Heart left ventricle (tissue), 16 donors: ENCODE measurements at regions of chr13 and their contacts with region 1.

Region 1: GRCh38 chr13:95301183-95301967 is at the start of gene ABCC4:
- DNase-seq: peak; percentile 66 to 81 (median 73)
- ATAC-seq: peak; percentile 35 to 93 (median 79)
- H3K4me3 ChIP-seq: peak within 1 kb of the TSS; percentile 61 to 97 (median 78)
- H3K27ac ChIP-seq: peak within 1 kb of the TSS; percentile 49 to 93 (median 77)
- H3K4me1 ChIP-seq: peaks cover 0 to 34% (median 9%) of the 10 kb centered on the region in 12 donors
- H3K27me3 ChIP-seq: no peaks in the 10 kb centered on the region
- CTCF ChIP-seq: peak in 2 of 12 donors; percentile 5 to 19
- POLR2A ChIP-seq: no peak
- total RNA-seq, gene ABCC4: 2.5 to 9.0 (median 5.5) TPM

Region 2: DNA sequence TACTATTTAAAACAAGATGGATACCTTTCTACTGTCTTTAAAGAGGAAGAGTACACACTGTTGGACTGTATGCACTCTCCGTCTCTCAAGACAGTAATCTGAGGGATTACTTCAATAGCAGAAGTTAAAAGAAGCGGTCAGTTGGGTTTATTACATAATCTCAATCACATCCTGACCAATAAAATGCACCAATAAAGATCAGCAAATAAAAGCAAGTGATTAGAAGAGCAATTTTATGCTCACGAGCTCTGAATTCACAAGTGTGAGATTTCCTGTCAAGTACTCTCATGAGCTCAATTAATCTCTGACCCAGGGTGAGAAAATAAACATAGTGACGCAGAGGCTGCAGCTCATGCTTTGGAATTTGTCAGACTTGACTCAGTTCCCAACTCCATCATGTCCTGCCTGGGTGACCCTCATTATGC is 12.3 kb before region 1 on chr13:
- intact Hi-C with region 1: no loop called
- DNase-seq: no peak
- ATAC-seq: no peak
- H3K4me3 ChIP-seq: no peak overlapping the region
- H3K27ac ChIP-seq: no peak overlapping the region
- H3K4me1 ChIP-seq: peaks cover 0 to 32% (median 11%) of the 10 kb centered on the region in 12 donors
- H3K27me3 ChIP-seq: no peaks in the 10 kb centered on the region
- CTCF ChIP-seq: no peak
- POLR2A ChIP-seq: no peak

Region 3: DNA sequence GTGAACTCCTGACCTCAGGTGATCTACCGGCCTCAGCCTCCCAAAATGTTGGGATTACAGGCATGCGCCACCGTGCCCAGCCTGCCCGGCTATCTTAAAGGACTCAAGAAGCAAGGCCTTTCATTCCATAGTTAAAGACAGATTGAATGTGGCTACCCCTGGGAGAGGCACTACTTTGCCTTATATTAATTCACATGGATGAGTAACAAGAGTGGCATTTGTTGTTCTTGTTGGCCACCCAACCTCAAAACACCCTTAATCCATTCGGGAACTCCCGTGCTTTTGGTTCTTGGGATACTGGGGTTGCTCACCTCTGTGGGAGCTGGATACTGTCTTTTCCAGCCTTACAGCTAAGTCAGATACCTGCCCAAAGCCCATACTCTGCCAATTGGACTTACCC is 34.3 kb after region 1 on chr13:
- intact Hi-C with region 1: no loop called
- DNase-seq: no peak
- ATAC-seq: no peak
- H3K4me3 ChIP-seq: no peak overlapping the region
- H3K27ac ChIP-seq: no peak overlapping the region
- H3K4me1 ChIP-seq: peaks cover 0 to 5% (median 0%) of the 10 kb centered on the region in 12 donors
- H3K27me3 ChIP-seq: no peaks in the 10 kb centered on the region
- CTCF ChIP-seq: no peak
- POLR2A ChIP-seq: no peak

Region 4: GRCh38 chr13:95378603-95379002 is 77.2 kb after region 1 on chr13:
- intact Hi-C with region 1: loop called (anchors 2 to 5 kb)
- DNase-seq: peak in 3 of 5 donors; percentile 41 to 65 (median 56)
- ATAC-seq: peak; percentile 69 to 95 (median 92)
- H3K4me3 ChIP-seq: no peak overlapping the region
- H3K27ac ChIP-seq: peak overlapping the region in 3 of 12 donors; percentile 9 to 46 (median 18)
- H3K4me1 ChIP-seq: peaks cover 0 to 11% (median 6%) of the 10 kb centered on the region in 12 donors
- H3K27me3 ChIP-seq: no peaks in the 10 kb centered on the region
- CTCF ChIP-seq: no peak
- POLR2A ChIP-seq: no peak

Region 5: GRCh38 chr13:95403828-95404522 is 102.6 kb after region 1 on chr13:
- intact Hi-C with region 1: loop called in 2 of 10 experiments (anchors 5 kb)
- DNase-seq: peak; percentile 81 to 90 (median 82)
- ATAC-seq: peak; percentile 72 to 96 (median 94)
- H3K4me3 ChIP-seq: peak overlapping the region in 10 of 12 donors; percentile 25 to 54 (median 44)
- H3K27ac ChIP-seq: no peak overlapping the region
- H3K4me1 ChIP-seq: peaks cover 0 to 8% (median 5%) of the 10 kb centered on the region in 12 donors
- H3K27me3 ChIP-seq: peaks cover 0 to 4% (median 0%) of the 10 kb centered on the region in 9 donors
- CTCF ChIP-seq: peak; percentile 89 to 97 (median 93)
- POLR2A ChIP-seq: no peak